ENCODE measurements at regions of chr4 and their contacts with region 1.

Region 1: GRCh38 chr4:140012688-140013486 is 141.1 kb downstream of the MAML3 start:
- DNase-seq: peak; percentile 75
- ATAC-seq: peak; percentile 87
- H3K4me3 ChIP-seq: no peak overlapping the region
- H3K4me3 Mint-ChIP-seq: no peak overlapping the region
- H3K27ac ChIP-seq: no peak overlapping the region
- H3K27ac Mint-ChIP-seq: no peak overlapping the region
- H3K4me1 ChIP-seq: peaks cover 0 to 5% of the 10 kb centered on the region in 2 donors
- H3K4me1 Mint-ChIP-seq: peaks cover 7% of the 10 kb centered on the region
- H3K27me3 ChIP-seq: peaks cover 0 to 4% (median 2%) of the 10 kb centered on the region in 4 experiments
- H3K27me3 Mint-ChIP-seq: peaks cover 15% of the 10 kb centered on the region
- CTCF ChIP-seq: peak; percentile 77

Region 2: GRCh38 chr4:139734875-139735380 is 278.0 kb before region 1 on chr4:
- CTCF ChIA-PET with region 1: interaction called, 6 read pairs
- POLR2A ChIA-PET with region 1: no interaction called
- intact Hi-C with region 1: loop called (anchors 1 kb)
- DNase-seq: peak; percentile 86
- ATAC-seq: peak; percentile 84
- H3K4me3 ChIP-seq: peak overlapping the region; percentile 33 to 78 (median 51)
- H3K4me3 Mint-ChIP-seq: peak overlapping the region; percentile 86
- H3K27ac ChIP-seq: peak overlapping the region in 1 of 2 donors; percentile 48
- H3K27ac Mint-ChIP-seq: no peak overlapping the region
- H3K4me1 ChIP-seq: peaks cover 17 to 23% of the 10 kb centered on the region in 2 donors
- H3K4me1 Mint-ChIP-seq: peaks cover 17% of the 10 kb centered on the region
- H3K27me3 ChIP-seq: peaks cover 0 to 27% (median 19%) of the 10 kb centered on the region in 4 experiments
- H3K27me3 Mint-ChIP-seq: peaks cover 35% of the 10 kb centered on the region
- CTCF ChIP-seq: peak; percentile 72

Region 3: DNA sequence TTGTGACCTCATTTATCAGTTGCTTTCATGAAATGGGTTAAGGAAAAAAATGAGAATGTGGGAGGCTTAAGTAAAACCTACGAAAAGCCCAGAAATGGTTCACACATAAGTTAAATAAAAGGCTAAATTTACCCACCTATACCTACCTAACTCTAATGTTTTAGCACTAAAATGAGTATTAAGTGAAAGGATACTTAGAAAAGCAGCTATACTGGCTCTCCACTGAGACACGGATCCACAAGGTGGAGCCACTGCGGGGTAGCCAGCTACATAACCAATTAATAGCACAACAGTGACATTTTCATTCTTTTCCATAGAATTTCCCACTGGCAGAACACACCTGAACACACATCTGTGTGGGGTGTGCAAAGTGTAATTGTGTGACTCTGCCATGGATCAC is 39.2 kb after region 1 on chr4:
- CTCF ChIA-PET with region 1: interaction called, 5 read pairs
- POLR2A ChIA-PET with region 1: no interaction called
- intact Hi-C with region 1: loop called (anchors 5 kb)
- DNase-seq: peak; percentile 44
- ATAC-seq: no peak
- H3K4me3 ChIP-seq: no peak overlapping the region
- H3K4me3 Mint-ChIP-seq: no peak overlapping the region
- H3K27ac ChIP-seq: no peak overlapping the region
- H3K27ac Mint-ChIP-seq: no peak overlapping the region
- H3K4me1 ChIP-seq: peaks cover 32 to 34% of the 10 kb centered on the region in 2 donors
- H3K4me1 Mint-ChIP-seq: peaks cover 47% of the 10 kb centered on the region
- H3K27me3 ChIP-seq: no peaks in the 10 kb centered on the region
- H3K27me3 Mint-ChIP-seq: peaks cover 44% of the 10 kb centered on the region
- CTCF ChIP-seq: peak; percentile 43

Measured in B cell (primary cell).